ENCODE measurements at regions of chr1 and their contacts with region 1.

Region 1: GRCh38 chr1:182084487-182085316 is 23.2 kb upstream of the ZNF648 start:
- DNase-seq: peak; percentile 95
- ATAC-seq: peak; percentile 92

Region 2: DNA sequence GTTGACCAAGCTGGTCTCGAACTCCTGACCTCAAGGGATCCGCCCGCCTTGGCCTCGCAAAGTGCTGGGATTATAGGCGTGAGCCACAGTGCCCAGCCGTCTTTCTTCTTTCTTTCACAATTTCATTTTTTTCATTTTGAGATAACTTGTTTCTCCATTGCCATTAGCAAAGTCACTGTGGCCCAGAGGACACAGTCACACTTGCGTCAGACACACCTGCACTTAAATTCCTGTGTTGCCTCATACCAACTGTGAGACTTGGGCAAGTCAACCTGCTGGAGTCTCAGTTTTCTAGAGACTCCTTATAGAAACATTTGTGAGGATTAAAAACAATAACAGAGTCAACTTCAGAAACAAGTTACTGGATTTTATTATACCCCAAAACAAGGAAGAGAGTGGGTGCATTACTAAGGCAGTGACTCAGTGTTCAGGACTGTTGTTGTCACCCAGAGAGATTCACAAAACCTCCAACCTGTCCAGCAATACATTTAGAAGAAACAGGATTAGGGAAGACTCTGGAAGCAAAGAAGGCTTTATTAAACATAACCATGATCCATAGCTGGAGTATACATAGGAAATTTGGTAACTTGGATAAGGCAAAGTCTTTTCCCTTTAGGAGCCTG is 313.2 kb after region 1 on chr1:
- intact Hi-C with region 1: loop called (anchors 2 kb)
- DNase-seq: no peak
- ATAC-seq: no peak

Region 3: GRCh38 chr1:182789138-182790076 is 704.7 kb after region 1 on chr1 and contains the start of gene NPL:
- intact Hi-C with region 1: loop called (anchors 10 kb)
- DNase-seq: peak; percentile 89
- ATAC-seq: peak; percentile 96
- total RNA-seq, gene NPL: 32.5 TPM

Measured in sciatic nerve (tissue), 2 donors.